PC-3 (cell line): ENCODE measurements at regions of chr9 and their contacts with region 1.

Region 1: GRCh38 chr9:129071526-129072131 is 9.3 kb upstream of the DOLPP1 start:
- DNase-seq: no peak
- ATAC-seq: no peak
- H3K4me3 ChIP-seq: no peak overlapping the region
- H3K27ac ChIP-seq: no peak overlapping the region
- H3K4me1 ChIP-seq: no peaks in the 10 kb centered on the region
- H3K27me3 ChIP-seq: no peaks in the 10 kb centered on the region
- CTCF ChIP-seq: no peak

Region 2: DNA sequence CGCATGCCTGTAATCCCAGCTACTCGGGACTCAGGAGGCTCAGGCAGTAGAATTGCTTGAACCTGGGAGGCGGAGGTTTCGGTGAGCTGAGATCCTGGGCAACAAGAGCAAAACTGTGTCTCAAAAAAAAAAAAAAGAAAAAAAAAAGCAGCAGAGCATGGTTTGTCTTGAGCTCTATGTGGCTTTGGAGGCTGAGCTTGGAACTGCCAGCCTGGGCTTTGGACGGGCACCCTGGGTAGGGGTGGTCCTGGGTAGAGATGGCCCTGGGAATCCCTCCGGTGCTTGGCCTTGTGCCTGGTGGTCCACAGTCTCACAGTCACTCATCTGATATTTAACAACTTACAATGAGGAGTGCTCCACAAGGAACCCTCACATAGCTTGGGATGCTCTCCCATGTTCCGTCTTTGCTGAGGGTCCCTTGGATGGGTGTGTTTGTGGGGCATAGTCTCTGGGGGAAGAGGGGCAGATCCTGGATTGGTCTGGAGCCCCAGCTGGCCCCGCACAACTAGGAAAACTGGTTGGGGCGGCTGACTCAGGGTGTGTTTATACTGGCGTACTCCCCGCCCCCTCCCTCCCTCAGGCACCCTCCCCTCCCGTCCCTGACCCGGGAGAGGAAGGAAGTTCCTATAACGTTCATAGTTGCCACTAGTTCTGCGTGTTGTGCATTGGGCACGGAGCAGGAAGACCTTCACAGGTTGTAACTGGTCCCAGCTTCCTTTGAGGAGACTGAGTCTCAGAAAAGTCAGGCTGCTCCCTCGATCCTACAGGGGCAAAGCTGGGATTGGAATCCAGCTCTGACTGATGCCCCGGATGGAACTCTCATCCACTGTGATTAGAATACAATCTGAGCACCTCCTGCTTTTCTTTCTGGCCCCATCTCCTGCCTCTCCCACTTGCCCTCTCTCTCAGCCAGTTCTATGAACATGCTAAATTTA is 95.3 kb after region 1 on chr9:
- CTCF ChIA-PET with region 1: no interaction called
- POLR2A ChIA-PET with region 1: interaction called, 28 read pairs
- intact Hi-C with region 1: no loop called
- DNase-seq: peak; percentile 86
- ATAC-seq: peak; percentile 71
- H3K4me3 ChIP-seq: peak overlapping the region; percentile 51; the same call in 1 of the 2 replicates
- H3K27ac ChIP-seq: peak overlapping the region; percentile 94
- H3K4me1 ChIP-seq: peaks cover 45% of the 10 kb centered on the region
- H3K27me3 ChIP-seq: no peaks in the 10 kb centered on the region
- CTCF ChIP-seq: no peak